ENCODE measurements at regions of chr17 and their contacts with region 1.

Region 1: GRCh38 chr17:56960596-56961538 is at the start of gene COIL:
- DNase-seq: peak; percentile 91 to 96
- ATAC-seq: peak; percentile 99 to 100 (median 100)
- H3K4me3 ChIP-seq: peak within 1 kb of the TSS; percentile 67
- H3K4me3 Mint-ChIP-seq: peak within 1 kb of the TSS; percentile 84
- H3K27ac ChIP-seq: peak within 1 kb of the TSS; percentile 82
- H3K27ac Mint-ChIP-seq: peak within 1 kb of the TSS; percentile 74 to 81
- H3K4me1 ChIP-seq: peaks cover 10% of the 10 kb centered on the region
- H3K4me1 Mint-ChIP-seq: peaks cover 17 to 18% of the 10 kb centered on the region in 2 donors
- H3K27me3 ChIP-seq: no peaks in the 10 kb centered on the region
- H3K27me3 Mint-ChIP-seq: peaks cover 0 to 2% of the 10 kb centered on the region in 2 donors
- CTCF ChIP-seq: peak; percentile 99
- total RNA-seq, gene COIL: 18.6 to 23.8 (median 20.6) TPM

Region 2: GRCh38 chr17:56833809-56834379 is 127.0 kb before region 1 on chr17 and contains the starts of genes C17orf67 and DGKE:
- intact Hi-C with region 1: loop called (anchors 5 kb)
- DNase-seq: peak; percentile 98
- ATAC-seq: peak; percentile 92 to 99 (median 93)
- H3K4me3 ChIP-seq: peak within 1 kb of the TSS; percentile 84
- H3K4me3 Mint-ChIP-seq: peak within 1 kb of the TSS; percentile 97
- H3K27ac ChIP-seq: peak within 1 kb of the TSS; percentile 78
- H3K27ac Mint-ChIP-seq: peak within 1 kb of the TSS; percentile 86 to 87
- H3K4me1 ChIP-seq: peaks cover 20% of the 10 kb centered on the region
- H3K4me1 Mint-ChIP-seq: peaks cover 41 to 52% of the 10 kb centered on the region in 2 donors
- H3K27me3 ChIP-seq: no peaks in the 10 kb centered on the region
- H3K27me3 Mint-ChIP-seq: no peaks in the 10 kb centered on the region
- CTCF ChIP-seq: no peak
- total RNA-seq, gene C17orf67: 3.4 to 4.8 (median 3.5) TPM
- total RNA-seq, gene DGKE: 19.3 to 31.0 (median 29.5) TPM

Region 3: GRCh38 chr17:56977673-56978395 is 17.0 kb after region 1 on chr17 and contains the start of gene SCPEP1:
- intact Hi-C with region 1: loop called (anchors 2 kb)
- DNase-seq: peak; percentile 65 to 88
- ATAC-seq: peak; percentile 98 to 99 (median 99)
- H3K4me3 ChIP-seq: peak within 1 kb of the TSS; percentile 77
- H3K4me3 Mint-ChIP-seq: peak within 1 kb of the TSS; percentile 92
- H3K27ac ChIP-seq: peak within 1 kb of the TSS; percentile 46
- H3K27ac Mint-ChIP-seq: peak within 1 kb of the TSS; percentile 53 to 88
- H3K4me1 ChIP-seq: peaks cover 18% of the 10 kb centered on the region
- H3K4me1 Mint-ChIP-seq: peaks cover 13 to 17% of the 10 kb centered on the region in 2 donors
- H3K27me3 ChIP-seq: no peaks in the 10 kb centered on the region
- H3K27me3 Mint-ChIP-seq: peaks cover 6 to 10% of the 10 kb centered on the region in 2 donors
- CTCF ChIP-seq: no peak
- total RNA-seq, gene SCPEP1: 28.7 to 37.2 (median 35.3) TPM

Region 4: DNA sequence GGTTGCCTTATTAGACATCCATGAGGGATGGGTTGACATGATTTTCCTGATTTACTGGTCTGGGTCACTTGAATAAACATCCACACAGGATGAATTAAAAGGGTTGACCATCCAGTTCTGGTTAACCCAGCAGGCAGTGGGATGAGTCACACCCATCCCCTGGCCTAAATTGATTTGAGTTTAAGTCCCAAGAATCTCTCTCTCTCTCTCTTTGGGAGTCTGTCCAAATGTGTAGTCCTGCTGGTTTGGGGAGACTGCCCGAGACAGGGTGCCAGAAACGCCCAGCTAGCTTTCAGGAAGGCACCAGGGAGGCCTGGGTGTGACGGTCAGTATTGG is 55.8 kb after region 1 on chr17:
- intact Hi-C with region 1: no loop called
- DNase-seq: no peak
- ATAC-seq: no peak
- H3K4me3 ChIP-seq: no peak overlapping the region
- H3K4me3 Mint-ChIP-seq: no peak overlapping the region
- H3K27ac ChIP-seq: no peak overlapping the region
- H3K27ac Mint-ChIP-seq: no peak overlapping the region
- H3K4me1 ChIP-seq: no peaks in the 10 kb centered on the region
- H3K4me1 Mint-ChIP-seq: no peaks in the 10 kb centered on the region
- H3K27me3 ChIP-seq: no peaks in the 10 kb centered on the region
- H3K27me3 Mint-ChIP-seq: peaks cover 15 to 29% of the 10 kb centered on the region in 2 donors
- CTCF ChIP-seq: no peak